ENCODE measurements at regions of chr1 and their contacts with region 1.

Region 1: GRCh38 chr1:2561898-2562545 is 5.9 kb downstream of the TNFRSF14 start:
- DNase-seq: no peak
- H3K4me3 ChIP-seq: no peak overlapping the region
- H3K27ac ChIP-seq: no peak overlapping the region
- H3K4me1 ChIP-seq: peaks cover 0 to 5% (median 0%) of the 10 kb centered on the region in 4 experiments; a peak in 1 of 7 replicates
- H3K27me3 ChIP-seq: no peaks in the 10 kb centered on the region
- CTCF ChIP-seq: peak in 2 of 3 experiments; percentile 61 to 69; a peak in 3 of 4 replicates
- EP300 ChIP-seq: no peak
- POLR2A ChIP-seq: no peak
- RAD21 ChIP-seq: peak; percentile 25 to 56; a peak in 3 of 4 replicates

Region 2: GRCh38 chr1:2580691-2581090 is 18.7 kb after region 1 on chr1:
- CTCF ChIA-PET with region 1: interaction called, 24 read pairs
- POLR2A ChIA-PET with region 1: interaction called, 4 read pairs
- DNase-seq: no peak
- H3K4me3 ChIP-seq: no peak overlapping the region
- H3K27ac ChIP-seq: no peak overlapping the region
- H3K4me1 ChIP-seq: peaks cover 0 to 20% (median 9%) of the 10 kb centered on the region in 4 experiments; a peak in 4 of 7 replicates
- H3K27me3 ChIP-seq: no peaks in the 10 kb centered on the region
- CTCF ChIP-seq: no peak
- EP300 ChIP-seq: no peak
- POLR2A ChIP-seq: no peak
- RAD21 ChIP-seq: no peak

Region 3: DNA sequence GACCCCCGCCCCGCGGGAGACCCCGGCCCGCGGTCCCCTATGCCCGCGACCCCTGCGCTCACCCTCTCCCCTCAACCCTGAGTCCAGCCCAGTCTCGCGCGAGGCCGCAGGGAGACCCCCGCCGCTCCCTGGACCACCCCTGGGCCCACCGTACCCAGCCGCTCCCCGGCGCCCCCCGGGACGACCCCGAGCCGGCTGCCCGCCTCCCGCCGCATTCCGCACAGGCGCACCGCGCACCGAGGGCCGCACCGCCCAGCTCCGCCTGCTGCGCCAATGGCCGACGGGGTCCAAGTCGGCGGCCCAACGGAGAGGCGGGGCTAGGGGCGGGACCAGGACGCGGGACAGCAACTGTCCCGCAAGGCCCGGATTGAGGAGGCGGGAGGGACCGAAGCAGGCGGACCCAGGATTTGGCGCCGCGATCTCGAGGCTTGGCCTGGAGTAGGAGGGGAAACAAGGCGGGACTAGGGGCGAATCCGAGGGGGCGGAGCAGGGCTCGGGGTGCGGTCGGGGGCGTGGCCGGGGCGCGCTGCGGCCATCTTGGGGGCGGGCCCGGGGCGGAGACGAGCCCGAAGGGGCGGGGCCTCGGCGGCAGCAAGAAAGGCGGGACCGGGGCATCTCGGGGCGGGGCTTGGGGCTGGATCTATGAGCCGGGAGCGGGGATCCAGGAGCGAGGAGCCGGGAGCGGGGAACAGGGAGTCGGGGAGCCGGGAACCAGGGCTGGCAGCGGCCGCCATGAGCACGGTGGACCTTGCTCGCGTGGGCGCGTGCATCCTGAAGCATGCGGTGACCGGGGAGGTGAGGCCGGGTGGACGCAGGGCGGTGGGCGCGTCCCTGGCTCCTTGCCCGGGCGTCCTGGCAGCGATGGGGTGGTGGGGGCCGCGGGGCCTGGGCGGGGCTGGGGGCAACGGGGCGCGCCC is 24.4 kb after region 1 on chr1 and contains the start of gene PRXL2B:
- CTCF ChIA-PET with region 1: interaction called, 24 read pairs
- POLR2A ChIA-PET with region 1: interaction called, 4 read pairs
- DNase-seq: peak; percentile 95 to 100
- H3K4me3 ChIP-seq: peak within 1 kb of the TSS; percentile 72 to 88 (median 79)
- H3K27ac ChIP-seq: peak within 1 kb of the TSS; percentile 49; the same call in 1 of the 2 replicates
- H3K4me1 ChIP-seq: peaks cover 0 to 25% (median 9%) of the 10 kb centered on the region in 4 experiments; a peak in 4 of 7 replicates
- H3K27me3 ChIP-seq: no peaks in the 10 kb centered on the region
- CTCF ChIP-seq: no peak
- EP300 ChIP-seq: peak in 1 of 2 experiments; percentile 54; a peak in 1 of 3 replicates
- POLR2A ChIP-seq: peak in 1 of 2 experiments; percentile 35; a peak in 1 of 3 replicates
- RAD21 ChIP-seq: no peak
- total RNA-seq, gene PRXL2B: 44.4 and 46.0 TPM in 2 replicates

Measured in H1 (cell line).